ENCODE measurements at regions of chr17 and their contacts with region 1.

Region 1: DNA sequence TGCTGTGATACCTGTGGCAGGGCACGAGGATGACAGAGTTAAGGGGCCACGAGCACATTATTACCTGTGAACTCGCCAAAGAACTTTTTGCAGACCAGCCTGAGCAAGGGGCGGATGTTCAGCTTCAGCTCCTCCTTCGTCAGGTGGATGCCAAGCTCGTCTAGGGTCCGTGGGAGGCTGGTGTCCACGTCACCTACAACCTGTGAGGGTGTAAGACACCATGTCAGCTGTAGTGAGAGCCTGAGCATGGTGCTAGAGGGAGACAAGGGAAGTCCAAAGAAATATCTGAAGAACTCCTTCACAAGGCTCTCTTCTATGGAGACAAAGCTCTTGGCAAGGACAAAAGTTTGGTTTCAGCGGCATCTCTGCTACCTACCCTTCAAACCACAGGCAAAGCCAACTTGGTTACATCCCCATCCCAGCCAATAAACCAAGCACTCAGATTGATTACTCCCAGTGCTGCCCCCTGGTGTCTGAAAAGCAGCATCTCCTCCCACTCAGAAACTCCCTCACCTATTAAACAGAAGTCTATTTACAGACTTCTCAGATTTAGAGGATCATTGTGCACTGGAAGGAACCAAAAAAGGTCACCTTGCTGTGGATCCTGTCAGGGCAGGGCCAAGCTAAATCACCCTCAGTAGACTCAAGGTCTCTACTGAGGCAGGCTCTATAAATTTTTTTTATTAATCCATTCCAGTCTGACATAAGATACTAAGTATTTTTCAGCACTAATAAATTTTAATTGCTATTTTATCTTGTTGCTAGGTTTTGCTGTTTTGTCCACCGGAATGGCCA is 17.4 kb downstream of the HIGD1B start:
- DNase-seq: peak; percentile 79
- H3K4me3 ChIP-seq: no peak overlapping the region; a peak in 1 of 4 replicates
- H3K27ac ChIP-seq: no peak overlapping the region
- H3K4me1 ChIP-seq: no peaks in the 10 kb centered on the region
- H3K27me3 ChIP-seq: 0 out of 2 replicates have a peak, but pooled peaks cover 3% of the 10 kb centered on the region
- CTCF ChIP-seq: peak; percentile 87
- EP300 ChIP-seq: no peak
- RAD21 ChIP-seq: peak; percentile 76

Region 2: DNA sequence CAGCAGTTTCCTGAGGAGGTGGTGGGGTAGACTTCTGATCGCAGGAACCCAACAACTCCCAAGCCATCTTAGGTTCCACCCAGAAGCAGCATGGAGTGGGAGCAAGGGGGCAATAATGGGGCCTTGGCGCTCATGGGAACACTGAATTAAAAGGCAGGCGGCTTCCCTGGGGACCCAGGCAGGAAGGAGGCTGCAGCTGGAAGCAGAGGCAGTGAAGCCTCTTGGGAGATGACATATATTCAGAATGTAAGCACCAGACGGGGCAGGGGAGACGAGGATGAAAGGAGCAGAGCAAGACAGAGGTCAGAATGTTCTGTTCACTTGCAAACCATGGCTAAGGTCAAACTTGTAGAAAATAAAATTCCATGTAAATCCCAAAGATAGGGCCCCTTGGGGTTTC is 14.5 kb before region 1 on chr17:
- CTCF ChIA-PET with region 1: interaction called, 18 read pairs
- POLR2A ChIA-PET with region 1: no interaction called
- DNase-seq: no peak
- H3K4me3 ChIP-seq: no peak overlapping the region
- H3K27ac ChIP-seq: no peak overlapping the region
- H3K4me1 ChIP-seq: peaks cover 0 to 3% of the 10 kb centered on the region in 2 experiments; a peak in 1 of 4 replicates
- H3K27me3 ChIP-seq: no peaks in the 10 kb centered on the region
- CTCF ChIP-seq: no peak
- EP300 ChIP-seq: no peak
- RAD21 ChIP-seq: no peak